CD8-positive, alpha-beta T cell (primary cell): ENCODE measurements at regions of chr12 and their contacts with region 1.

Region 1: DNA sequence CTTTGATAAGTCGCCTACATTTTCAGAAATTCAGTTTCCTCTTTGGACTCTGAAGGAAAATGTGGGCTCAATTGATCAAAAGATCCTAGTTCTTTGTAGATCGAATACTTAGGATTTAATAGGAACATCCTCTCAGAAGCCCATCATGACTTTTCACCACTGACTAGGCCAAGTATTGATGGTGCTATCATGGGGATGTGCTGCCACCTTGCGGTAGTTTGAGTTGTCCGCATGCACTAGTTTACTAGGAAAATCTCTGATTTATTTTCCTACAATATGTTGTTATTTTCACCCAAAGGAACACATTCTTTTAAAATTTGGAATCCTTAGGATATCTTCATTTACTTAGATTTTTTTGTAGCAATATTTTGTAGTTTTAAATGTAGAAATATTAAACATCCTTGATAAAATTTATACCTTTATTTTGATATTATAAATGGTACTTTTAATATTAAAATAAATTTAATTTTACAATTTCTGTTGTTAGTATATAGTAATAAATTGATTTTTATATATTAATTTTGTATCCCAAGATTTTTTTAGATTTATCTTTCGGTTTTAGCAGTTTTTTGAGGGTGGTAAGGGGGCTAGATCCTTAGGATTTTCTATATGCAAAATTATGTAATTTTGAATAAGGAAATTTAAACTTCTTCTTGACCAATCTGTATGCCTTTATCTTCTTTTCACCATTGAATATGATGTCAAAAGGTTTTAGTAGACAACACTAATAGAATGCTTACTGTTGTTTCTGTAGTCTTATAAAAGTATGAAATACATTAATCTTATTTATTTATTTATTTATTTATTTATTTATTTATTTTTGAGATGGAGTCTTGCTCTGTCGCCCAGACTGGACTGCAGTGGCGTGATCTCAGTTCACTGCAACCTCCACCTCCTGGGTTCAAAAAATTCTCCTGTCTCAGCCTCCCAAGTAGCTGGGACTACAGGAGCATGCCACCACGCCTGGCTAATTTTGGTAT is 52.9 kb upstream of the OR9K2 start:
- DNase-seq: peak; percentile 47 to 88 (median 85)
- ATAC-seq: peak; percentile 60
- H3K4me3 ChIP-seq: no peak overlapping the region
- H3K4me3 Mint-ChIP-seq: no peak overlapping the region
- H3K27ac ChIP-seq: no peak overlapping the region
- H3K27ac Mint-ChIP-seq: no peak overlapping the region
- H3K4me1 ChIP-seq: no peaks in the 10 kb centered on the region
- H3K4me1 Mint-ChIP-seq: peaks cover 2% of the 10 kb centered on the region
- H3K27me3 ChIP-seq: no peaks in the 10 kb centered on the region
- H3K27me3 Mint-ChIP-seq: peaks cover 23% of the 10 kb centered on the region
- CTCF ChIP-seq: peak; percentile 79

Region 2: GRCh38 chr12:54596526-54596946 is 476.8 kb before region 1 on chr12:
- CTCF ChIA-PET with region 1: interaction called, 8 read pairs
- POLR2A ChIA-PET with region 1: no interaction called
- intact Hi-C with region 1: loop called (anchors 5 to 10 kb)
- DNase-seq: peak in 8 of 9 experiments; percentile 13 to 66 (median 54)
- ATAC-seq: peak; percentile 36
- H3K4me3 ChIP-seq: no peak overlapping the region
- H3K4me3 Mint-ChIP-seq: no peak overlapping the region
- H3K27ac ChIP-seq: no peak overlapping the region
- H3K27ac Mint-ChIP-seq: no peak overlapping the region
- H3K4me1 ChIP-seq: peaks cover 5% of the 10 kb centered on the region
- H3K4me1 Mint-ChIP-seq: peaks cover 4% of the 10 kb centered on the region
- H3K27me3 ChIP-seq: no peaks in the 10 kb centered on the region
- H3K27me3 Mint-ChIP-seq: peaks cover 5% of the 10 kb centered on the region
- CTCF ChIP-seq: peak; percentile 73

Region 3: DNA sequence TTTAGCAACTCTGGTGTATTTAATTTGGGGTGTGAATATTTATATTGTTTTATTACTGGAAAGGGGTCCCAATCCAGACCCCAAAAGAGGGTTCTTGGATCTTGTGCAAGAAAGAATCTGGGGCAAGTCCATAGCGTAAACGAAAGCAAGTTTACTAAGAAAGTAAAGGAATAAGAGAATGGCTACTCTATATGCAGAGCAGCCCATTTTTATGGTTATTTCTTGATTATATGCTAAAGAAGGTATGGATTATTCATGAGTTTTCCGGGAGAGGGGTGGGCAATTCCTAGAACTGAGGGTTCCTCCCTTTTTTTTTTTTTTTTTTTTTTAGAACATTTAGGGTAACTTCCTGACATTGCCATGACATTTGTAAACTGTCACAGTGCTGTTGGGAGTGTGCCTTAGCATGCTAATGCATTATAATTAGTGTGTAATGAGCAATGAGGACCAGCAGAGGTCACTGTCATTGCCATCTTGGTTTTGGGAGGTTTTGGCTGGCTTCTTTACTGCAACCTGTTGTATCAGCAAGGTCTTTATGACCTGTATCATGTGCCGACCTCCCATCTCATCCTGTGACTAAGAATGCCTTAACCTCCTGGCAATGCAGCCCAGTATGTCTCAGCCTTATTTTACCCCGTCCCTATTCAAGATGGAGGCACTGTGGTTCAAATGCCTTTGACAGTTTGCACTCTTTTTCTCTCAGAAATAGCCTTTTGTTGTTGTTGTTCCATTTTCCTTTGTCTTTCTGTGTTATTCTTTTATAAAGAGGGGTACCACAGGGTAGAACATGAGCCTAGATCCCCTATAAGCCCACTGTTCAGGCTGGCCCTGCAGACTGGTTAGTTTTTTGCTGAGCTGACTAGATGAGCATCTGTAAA is 349.7 kb before region 1 on chr12:
- CTCF ChIA-PET with region 1: interaction called, 24 read pairs
- POLR2A ChIA-PET with region 1: no interaction called
- intact Hi-C with region 1: loop called (anchors 1 kb)
- DNase-seq: peak in 5 of 9 experiments; percentile 10 to 70 (median 26)
- ATAC-seq: peak; percentile 72
- H3K4me3 ChIP-seq: no peak overlapping the region
- H3K4me3 Mint-ChIP-seq: no peak overlapping the region
- H3K27ac ChIP-seq: no peak overlapping the region
- H3K27ac Mint-ChIP-seq: no peak overlapping the region
- H3K4me1 ChIP-seq: peaks cover 10% of the 10 kb centered on the region
- H3K4me1 Mint-ChIP-seq: peaks cover 18% of the 10 kb centered on the region
- H3K27me3 ChIP-seq: no peaks in the 10 kb centered on the region
- H3K27me3 Mint-ChIP-seq: peaks cover 6% of the 10 kb centered on the region
- CTCF ChIP-seq: peak; percentile 67

Region 4: GRCh38 chr12:54824402-54824801 is 248.9 kb before region 1 on chr12:
- CTCF ChIA-PET with region 1: no interaction called
- POLR2A ChIA-PET with region 1: no interaction called
- intact Hi-C with region 1: no loop called
- DNase-seq: no peak
- ATAC-seq: no peak
- H3K4me3 ChIP-seq: no peak overlapping the region
- H3K4me3 Mint-ChIP-seq: no peak overlapping the region
- H3K27ac ChIP-seq: no peak overlapping the region
- H3K27ac Mint-ChIP-seq: no peak overlapping the region
- H3K4me1 ChIP-seq: no peaks in the 10 kb centered on the region
- H3K4me1 Mint-ChIP-seq: no peaks in the 10 kb centered on the region
- H3K27me3 ChIP-seq: no peaks in the 10 kb centered on the region
- H3K27me3 Mint-ChIP-seq: peaks cover 5% of the 10 kb centered on the region
- CTCF ChIP-seq: peak; percentile 31

Region 5: DNA sequence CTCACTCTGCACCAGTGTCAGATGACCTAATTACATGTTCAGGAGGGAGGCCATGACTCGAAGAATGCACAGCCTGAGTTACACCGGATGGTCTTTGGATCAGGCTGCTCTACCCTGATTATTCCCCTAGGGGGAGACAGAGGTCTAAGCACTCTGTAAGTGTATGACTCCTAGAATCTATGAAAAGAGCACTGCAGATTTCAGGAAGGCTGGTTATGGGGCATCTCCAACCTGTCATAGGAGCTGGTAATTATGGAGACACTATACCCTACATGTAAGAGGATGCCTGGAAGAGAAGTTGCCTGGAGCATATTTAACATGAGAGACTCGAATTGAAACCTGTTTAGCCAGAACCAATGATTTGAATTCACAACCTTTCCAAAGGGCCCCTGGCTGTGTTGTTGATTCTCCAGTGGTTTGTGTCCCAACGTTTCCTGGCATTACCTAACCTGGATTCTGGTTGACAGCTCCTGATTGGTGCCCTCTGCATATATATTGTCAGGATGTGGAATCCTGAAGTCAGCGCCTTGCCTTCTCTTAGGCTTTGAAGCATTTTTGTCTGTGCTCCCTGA is 219.3 kb before region 1 on chr12 and contains the start of gene MUCL1:
- CTCF ChIA-PET with region 1: interaction called, 63 read pairs
- POLR2A ChIA-PET with region 1: no interaction called
- intact Hi-C with region 1: loop called (anchors 1 kb)
- DNase-seq: peak; percentile 52 to 83 (median 72)
- ATAC-seq: peak; percentile 100
- H3K4me3 ChIP-seq: no peak within 1 kb of the TSS
- H3K4me3 Mint-ChIP-seq: no peak within 1 kb of the TSS
- H3K27ac ChIP-seq: no peak within 1 kb of the TSS
- H3K27ac Mint-ChIP-seq: no peak within 1 kb of the TSS
- H3K4me1 ChIP-seq: no peaks in the 10 kb centered on the region
- H3K4me1 Mint-ChIP-seq: peaks cover 4% of the 10 kb centered on the region
- H3K27me3 ChIP-seq: no peaks in the 10 kb centered on the region
- H3K27me3 Mint-ChIP-seq: peaks cover 2% of the 10 kb centered on the region
- CTCF ChIP-seq: peak; percentile 93
- total RNA-seq, gene MUCL1: not detected

Region 6: DNA sequence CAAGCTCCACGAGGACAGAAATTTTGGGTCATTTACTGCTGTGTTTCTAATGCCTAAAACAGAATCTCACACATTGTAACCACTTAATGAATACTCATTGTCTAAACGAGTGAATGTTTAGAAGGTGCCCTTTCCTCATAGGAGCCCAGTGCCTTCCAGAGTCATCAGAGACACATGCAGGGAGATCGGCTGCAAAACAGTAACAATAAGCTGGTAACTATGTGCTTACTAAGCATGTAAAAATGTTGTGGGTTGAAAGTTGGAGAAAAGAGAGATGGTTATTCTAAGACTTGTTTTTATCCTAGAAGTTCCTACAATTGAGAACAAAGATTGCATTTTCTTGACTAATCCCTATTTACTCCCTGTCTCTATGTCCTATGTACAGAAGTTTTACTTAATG is 96.2 kb before region 1 on chr12:
- CTCF ChIA-PET with region 1: interaction called, 67 read pairs
- POLR2A ChIA-PET with region 1: no interaction called
- intact Hi-C with region 1: no loop called
- DNase-seq: no peak
- ATAC-seq: no peak
- H3K4me3 ChIP-seq: no peak overlapping the region
- H3K4me3 Mint-ChIP-seq: peak overlapping the region; percentile 77
- H3K27ac ChIP-seq: no peak overlapping the region
- H3K27ac Mint-ChIP-seq: peak overlapping the region; percentile 86
- H3K4me1 ChIP-seq: peaks cover 92% of the 10 kb centered on the region
- H3K4me1 Mint-ChIP-seq: peaks cover 98% of the 10 kb centered on the region
- H3K27me3 ChIP-seq: no peaks in the 10 kb centered on the region
- H3K27me3 Mint-ChIP-seq: no peaks in the 10 kb centered on the region
- CTCF ChIP-seq: no peak

Region 7: GRCh38 chr12:55037351-55037987 is 35.9 kb before region 1 on chr12:
- CTCF ChIA-PET with region 1: interaction called, 13 read pairs
- POLR2A ChIA-PET with region 1: interaction called, 4 read pairs
- intact Hi-C with region 1: no loop called
- DNase-seq: no peak
- ATAC-seq: no peak
- H3K4me3 ChIP-seq: no peak overlapping the region
- H3K4me3 Mint-ChIP-seq: no peak overlapping the region
- H3K27ac ChIP-seq: no peak overlapping the region
- H3K27ac Mint-ChIP-seq: peak overlapping the region; percentile 10
- H3K4me1 ChIP-seq: peaks cover 43% of the 10 kb centered on the region
- H3K4me1 Mint-ChIP-seq: peaks cover 57% of the 10 kb centered on the region
- H3K27me3 ChIP-seq: no peaks in the 10 kb centered on the region
- H3K27me3 Mint-ChIP-seq: peaks cover 1% of the 10 kb centered on the region
- CTCF ChIP-seq: no peak

Region 8: DNA sequence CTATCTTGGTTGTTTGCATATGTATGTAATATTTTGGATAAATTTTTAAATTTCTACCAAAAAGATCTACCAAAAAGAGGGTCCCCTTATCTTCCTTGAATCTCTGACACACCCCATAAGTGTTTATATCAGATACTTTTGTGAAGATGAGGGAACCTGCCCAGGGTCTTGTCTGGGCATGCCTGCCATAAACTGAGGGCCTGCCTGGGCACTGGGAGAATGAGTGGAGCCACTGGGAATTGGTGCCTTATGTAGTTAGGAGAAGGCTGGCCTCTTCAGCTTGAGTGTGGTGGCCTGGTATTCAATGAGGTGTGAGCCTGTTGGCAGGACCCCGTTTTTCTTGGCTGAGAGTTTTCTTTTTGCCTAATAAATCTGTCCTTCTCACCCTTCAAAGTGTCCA is 99.4 kb after region 1 on chr12:
- CTCF ChIA-PET with region 1: no interaction called
- POLR2A ChIA-PET with region 1: no interaction called
- intact Hi-C with region 1: no loop called
- DNase-seq: no peak
- ATAC-seq: no peak
- H3K4me3 ChIP-seq: no peak overlapping the region
- H3K4me3 Mint-ChIP-seq: no peak overlapping the region
- H3K27ac ChIP-seq: no peak overlapping the region
- H3K27ac Mint-ChIP-seq: no peak overlapping the region
- H3K4me1 ChIP-seq: no peaks in the 10 kb centered on the region
- H3K4me1 Mint-ChIP-seq: no peaks in the 10 kb centered on the region
- H3K27me3 ChIP-seq: no peaks in the 10 kb centered on the region
- H3K27me3 Mint-ChIP-seq: peaks cover 16% of the 10 kb centered on the region
- CTCF ChIP-seq: no peak

Region 9: GRCh38 chr12:55280991-55281390 is 207.7 kb after region 1 on chr12:
- CTCF ChIA-PET with region 1: no interaction called
- POLR2A ChIA-PET with region 1: no interaction called
- intact Hi-C with region 1: no loop called
- DNase-seq: no peak
- ATAC-seq: no peak
- H3K4me3 ChIP-seq: no peak overlapping the region
- H3K4me3 Mint-ChIP-seq: no peak overlapping the region
- H3K27ac ChIP-seq: no peak overlapping the region
- H3K27ac Mint-ChIP-seq: no peak overlapping the region
- H3K4me1 ChIP-seq: no peaks in the 10 kb centered on the region
- H3K4me1 Mint-ChIP-seq: no peaks in the 10 kb centered on the region
- H3K27me3 ChIP-seq: no peaks in the 10 kb centered on the region
- H3K27me3 Mint-ChIP-seq: peaks cover 18% of the 10 kb centered on the region
- CTCF ChIP-seq: no peak